Endothelial cell of umbilical vein (primary cell): ENCODE measurements at regions of chr11 and their contacts with region 1.

Region 1: GRCh38 chr11:36056160-36056751 is 112.4 kb downstream of the LDLRAD3 start:
- DNase-seq: peak; percentile 58
- H3K4me3 ChIP-seq: no peak overlapping the region
- H3K27ac ChIP-seq: no peak overlapping the region
- H3K4me1 ChIP-seq: peaks cover 18% of the 10 kb centered on the region
- H3K27me3 ChIP-seq: no peaks in the 10 kb centered on the region
- CTCF ChIP-seq: peak; percentile 69 to 73
- POLR2A ChIP-seq: no peak

Region 2: DNA sequence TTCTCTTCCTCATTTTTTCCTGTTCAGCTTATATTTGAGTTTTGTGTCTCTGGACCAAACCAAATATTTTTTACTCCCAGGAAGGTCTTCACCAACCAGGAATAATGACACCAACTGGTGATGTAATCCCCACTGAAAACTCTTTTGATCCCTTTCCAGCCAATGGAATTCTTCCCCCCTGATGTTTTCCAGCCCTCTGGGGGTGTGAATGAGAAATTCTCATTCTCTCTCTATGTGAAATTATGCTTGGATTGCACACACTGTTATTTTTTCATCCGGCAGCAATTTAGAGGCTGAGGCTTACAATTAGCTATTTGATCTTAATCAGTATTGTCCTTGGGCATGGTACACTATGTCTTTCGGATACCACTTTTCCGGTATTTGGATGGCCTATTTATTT is 597.4 kb before region 1 on chr11:
- CTCF ChIA-PET with region 1: no interaction called
- POLR2A ChIA-PET with region 1: no interaction called
- dilution Hi-C with region 1: no loop called
- intact Hi-C with region 1: no loop called
- DNase-seq: no peak
- H3K4me3 ChIP-seq: no peak overlapping the region
- H3K27ac ChIP-seq: no peak overlapping the region
- H3K4me1 ChIP-seq: no peaks in the 10 kb centered on the region
- H3K27me3 ChIP-seq: peaks cover 2 to 4% of the 10 kb centered on the region in 2 experiments
- CTCF ChIP-seq: no peak
- POLR2A ChIP-seq: no peak

Region 3: GRCh38 chr11:35721651-35722282 is 334.5 kb before region 1 on chr11:
- CTCF ChIA-PET with region 1: no interaction called
- POLR2A ChIA-PET with region 1: no interaction called
- dilution Hi-C with region 1: no loop called
- intact Hi-C with region 1: no loop called
- DNase-seq: no peak
- H3K4me3 ChIP-seq: no peak overlapping the region
- H3K27ac ChIP-seq: no peak overlapping the region
- H3K4me1 ChIP-seq: no peaks in the 10 kb centered on the region
- H3K27me3 ChIP-seq: no peaks in the 10 kb centered on the region
- CTCF ChIP-seq: no peak
- POLR2A ChIP-seq: no peak

Region 4: DNA sequence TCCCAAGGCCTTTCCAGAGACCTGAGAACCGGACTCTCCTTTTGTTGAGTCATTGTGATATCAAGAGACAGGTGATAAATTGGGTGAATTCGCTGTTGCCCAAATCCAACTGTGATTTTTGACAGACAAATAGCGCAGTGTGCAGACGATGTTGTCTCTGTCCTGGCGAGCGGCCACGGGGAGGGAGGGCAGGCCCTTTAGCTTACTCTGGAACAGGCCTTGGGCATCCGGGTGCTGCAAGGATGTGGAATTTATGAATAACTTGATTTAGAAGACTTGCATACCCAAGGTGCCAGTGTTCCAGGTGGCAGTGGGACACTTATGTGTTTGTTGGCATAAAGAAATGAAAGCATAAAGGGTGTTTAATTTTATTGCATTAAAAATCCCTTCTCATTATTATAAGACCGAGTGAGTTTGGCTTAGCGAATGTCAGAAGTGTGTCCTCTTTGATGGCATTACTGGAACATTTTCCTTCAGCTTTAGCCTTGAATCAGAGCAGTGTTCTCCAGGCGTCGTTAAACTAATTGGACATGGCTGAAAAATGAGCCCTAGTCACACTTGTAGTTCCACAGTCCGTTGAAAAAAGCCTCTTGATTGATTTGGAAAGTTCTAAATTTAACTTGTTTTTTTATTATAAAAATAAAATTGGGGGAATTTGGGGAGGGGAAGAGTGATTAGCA is 103.0 kb before region 1 on chr11:
- CTCF ChIA-PET with region 1: interaction called, 6 read pairs
- POLR2A ChIA-PET with region 1: no interaction called
- dilution Hi-C with region 1: no loop called
- intact Hi-C with region 1: loop called (anchors 1 kb)
- DNase-seq: peak; percentile 42
- H3K4me3 ChIP-seq: no peak overlapping the region
- H3K27ac ChIP-seq: peak overlapping the region; percentile 35
- H3K4me1 ChIP-seq: peaks cover 31% of the 10 kb centered on the region
- H3K27me3 ChIP-seq: no peaks in the 10 kb centered on the region
- CTCF ChIP-seq: no peak
- POLR2A ChIP-seq: no peak

Region 5: GRCh38 chr11:36002196-36002595 is 54.1 kb before region 1 on chr11:
- CTCF ChIA-PET with region 1: no interaction called
- POLR2A ChIA-PET with region 1: no interaction called
- dilution Hi-C with region 1: no loop called
- intact Hi-C with region 1: no loop called
- DNase-seq: peak; percentile 75
- H3K4me3 ChIP-seq: no peak overlapping the region
- H3K27ac ChIP-seq: peak overlapping the region; percentile 50
- H3K4me1 ChIP-seq: peaks cover 17% of the 10 kb centered on the region
- H3K27me3 ChIP-seq: no peaks in the 10 kb centered on the region
- CTCF ChIP-seq: no peak
- POLR2A ChIP-seq: no peak

Region 6: GRCh38 chr11:36073411-36074203 is 17.4 kb after region 1 on chr11:
- CTCF ChIA-PET with region 1: interaction called, 38 read pairs
- POLR2A ChIA-PET with region 1: no interaction called
- dilution Hi-C with region 1: no loop called
- intact Hi-C with region 1: loop called (anchors 1 kb)
- DNase-seq: peak; percentile 90
- H3K4me3 ChIP-seq: no peak overlapping the region
- H3K27ac ChIP-seq: peak overlapping the region; percentile 62
- H3K4me1 ChIP-seq: peaks cover 32% of the 10 kb centered on the region
- H3K27me3 ChIP-seq: no peaks in the 10 kb centered on the region
- CTCF ChIP-seq: no peak
- POLR2A ChIP-seq: no peak

Region 7: DNA sequence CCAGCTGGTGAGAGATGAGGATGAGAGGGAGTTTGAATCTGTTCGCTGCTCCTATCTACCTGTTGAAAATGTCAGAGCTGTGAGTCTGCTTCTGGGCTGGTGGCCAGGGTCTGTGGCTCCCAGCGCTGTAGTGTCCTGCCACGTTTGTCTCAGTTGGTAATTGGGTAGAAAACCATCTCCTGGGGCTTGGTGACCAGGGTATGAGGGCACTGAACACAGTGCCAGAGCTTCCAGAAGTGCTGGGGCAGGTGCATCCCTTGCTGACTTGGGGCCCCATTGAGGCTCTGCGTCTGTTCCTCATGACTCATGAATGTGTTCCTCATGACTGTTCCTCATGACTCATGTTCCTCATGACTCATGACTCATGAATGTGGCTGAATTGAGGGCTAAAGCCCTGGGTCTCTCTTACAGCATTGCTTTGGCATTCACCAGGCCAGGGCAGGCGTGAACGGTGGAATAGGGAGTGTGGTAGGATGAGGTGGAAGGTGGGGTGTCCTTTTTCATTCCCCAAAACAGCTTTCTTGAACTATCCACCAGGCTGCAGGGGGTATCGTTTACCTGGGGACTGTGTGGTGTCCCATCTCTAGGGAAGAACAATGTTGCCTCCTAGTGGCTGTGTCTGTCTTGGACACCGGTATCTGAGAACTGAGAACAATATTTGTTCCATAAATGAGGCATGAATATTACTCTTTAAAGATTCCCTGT is 93.4 kb after region 1 on chr11:
- CTCF ChIA-PET with region 1: interaction called, 11 read pairs
- POLR2A ChIA-PET with region 1: no interaction called
- dilution Hi-C with region 1: no loop called
- intact Hi-C with region 1: loop called (anchors 1 kb)
- DNase-seq: peak; percentile 99
- H3K4me3 ChIP-seq: no peak overlapping the region
- H3K27ac ChIP-seq: peak overlapping the region; percentile 93
- H3K4me1 ChIP-seq: peaks cover 25% of the 10 kb centered on the region
- H3K27me3 ChIP-seq: no peaks in the 10 kb centered on the region
- CTCF ChIP-seq: peak; percentile 43 to 50
- POLR2A ChIP-seq: peak; percentile 64

Region 8: DNA sequence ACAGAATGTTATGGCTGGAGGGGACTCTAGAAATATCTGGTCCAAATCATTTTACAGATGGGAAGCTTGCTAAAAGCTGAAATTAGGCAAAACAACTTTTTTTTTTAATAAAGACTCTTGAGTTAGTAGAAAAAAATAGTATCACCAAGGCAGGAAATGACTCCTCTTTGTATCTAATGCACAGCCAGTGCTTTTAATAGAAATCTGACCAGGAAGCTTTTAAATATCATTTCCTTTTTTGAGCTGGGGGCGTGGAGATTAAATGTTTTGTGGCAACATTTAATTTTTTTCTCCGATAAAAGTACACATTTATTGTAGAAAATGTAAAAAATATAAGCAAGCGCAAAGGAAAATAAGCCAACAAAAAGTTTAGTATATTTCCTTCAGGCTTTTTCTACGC is 431.4 kb after region 1 on chr11:
- CTCF ChIA-PET with region 1: interaction called, 5 read pairs
- POLR2A ChIA-PET with region 1: no interaction called
- dilution Hi-C with region 1: no loop called
- intact Hi-C with region 1: loop called (anchors 1 kb)
- DNase-seq: peak; percentile 63
- H3K4me3 ChIP-seq: peak overlapping the region in 1 of 3 experiments; percentile 50
- H3K27ac ChIP-seq: peak overlapping the region; percentile 72
- H3K4me1 ChIP-seq: peaks cover 19% of the 10 kb centered on the region
- H3K27me3 ChIP-seq: no peaks in the 10 kb centered on the region
- CTCF ChIP-seq: no peak
- POLR2A ChIP-seq: no peak